ENCODE measurements at regions of chr2 and their contacts with region 1.

Region 1: DNA sequence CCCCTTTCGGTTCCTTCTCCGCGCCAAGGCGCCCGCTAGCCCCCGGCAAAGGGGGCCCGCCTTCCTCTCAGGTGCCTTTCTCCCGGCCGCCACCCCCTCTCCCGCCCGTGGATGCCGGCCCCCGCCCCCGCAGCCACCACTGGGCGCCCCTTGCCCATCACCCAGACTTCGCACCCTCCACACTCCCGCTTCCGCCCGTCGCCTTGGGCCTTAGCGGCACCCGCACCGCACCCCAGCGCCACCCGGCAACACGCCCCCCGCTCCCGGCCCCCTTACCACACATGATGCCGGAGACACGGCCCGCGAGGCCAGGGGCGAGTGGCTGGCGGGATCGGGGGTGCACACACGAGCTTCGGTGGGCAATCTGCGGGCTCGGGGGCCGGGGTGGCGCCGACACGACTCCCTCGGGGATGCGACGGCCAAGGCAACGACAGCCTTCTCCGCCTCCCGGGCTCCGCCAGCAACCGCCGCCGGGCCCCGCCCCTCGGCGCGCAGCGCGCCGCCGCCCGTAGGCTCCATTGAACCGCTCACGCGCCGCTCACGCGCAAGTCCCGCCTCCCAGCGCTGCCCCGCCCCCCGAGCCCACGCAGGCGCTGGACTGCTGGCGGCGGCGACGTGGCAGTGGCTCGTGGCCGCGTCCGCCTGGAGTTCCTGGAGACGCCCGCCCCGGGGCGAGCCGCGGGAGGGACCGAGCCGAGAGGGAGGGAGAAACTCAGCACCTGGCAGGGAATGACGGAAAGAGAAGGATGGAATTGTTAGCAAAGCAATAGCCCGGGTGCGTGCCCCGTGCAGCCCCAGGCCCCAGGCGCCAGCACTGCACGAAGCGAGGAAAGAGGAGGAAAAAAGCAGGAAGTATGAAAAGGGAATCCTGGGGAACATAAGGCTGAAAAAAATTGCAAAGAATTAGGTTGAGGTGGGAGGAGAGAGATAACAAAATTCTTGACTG is at the start of gene GFPT1:
- DNase-seq: peak; percentile 81 to 97 (median 91)
- H3K4me3 ChIP-seq: peak within 1 kb of the TSS; percentile 62 to 99 (median 89)
- H3K27ac ChIP-seq: peak within 1 kb of the TSS in 55 of 59 donors; percentile 9 to 91 (median 73)
- H3K27me3 ChIP-seq: no peaks in the 10 kb centered on the region
- CTCF ChIP-seq: peak in 29 of 56 donors; percentile 3 to 60 (median 28)
- total RNA-seq, gene GFPT1: 18.0 to 44.5 (median 31.9) TPM

Region 2: DNA sequence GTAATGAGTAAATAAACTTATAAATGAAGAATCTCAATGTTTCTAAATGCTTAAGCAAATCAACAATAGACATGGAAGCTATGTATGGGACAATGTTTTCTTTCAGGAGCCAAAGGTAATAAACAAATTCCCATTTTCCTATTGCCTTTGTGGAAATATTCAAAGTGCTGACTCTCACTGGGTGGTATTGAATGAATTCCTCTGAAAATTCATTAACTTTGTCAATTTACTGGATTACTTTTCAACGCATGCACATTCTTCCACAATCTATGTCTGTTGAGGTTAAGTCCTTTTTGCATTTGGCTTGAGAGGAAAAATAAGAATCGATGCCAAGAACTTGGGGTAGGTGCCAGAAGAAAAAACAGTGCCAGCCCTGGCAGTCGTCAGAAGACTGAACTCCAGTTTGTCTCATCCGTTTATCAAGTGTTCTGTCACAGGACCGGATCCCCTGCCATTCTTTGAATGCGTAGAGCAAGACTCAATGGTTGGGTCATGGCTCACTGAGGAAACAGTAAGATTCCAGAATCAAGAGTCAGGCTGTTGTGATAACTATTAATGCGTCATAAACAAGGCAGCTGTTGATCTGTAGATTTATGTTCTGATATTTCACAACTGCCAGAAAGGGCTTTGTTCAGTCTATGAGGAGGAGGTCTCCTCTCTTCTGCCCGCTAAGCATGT is 133.3 kb before region 1 on chr2:
- intact Hi-C with region 1: no loop called
- DNase-seq: no peak
- H3K4me3 ChIP-seq: no peak overlapping the region
- H3K27ac ChIP-seq: no peak overlapping the region
- H3K27me3 ChIP-seq: peaks cover 0 to 9% (median 0%) of the 10 kb centered on the region in 45 donors
- CTCF ChIP-seq: no peak

Region 3: DNA sequence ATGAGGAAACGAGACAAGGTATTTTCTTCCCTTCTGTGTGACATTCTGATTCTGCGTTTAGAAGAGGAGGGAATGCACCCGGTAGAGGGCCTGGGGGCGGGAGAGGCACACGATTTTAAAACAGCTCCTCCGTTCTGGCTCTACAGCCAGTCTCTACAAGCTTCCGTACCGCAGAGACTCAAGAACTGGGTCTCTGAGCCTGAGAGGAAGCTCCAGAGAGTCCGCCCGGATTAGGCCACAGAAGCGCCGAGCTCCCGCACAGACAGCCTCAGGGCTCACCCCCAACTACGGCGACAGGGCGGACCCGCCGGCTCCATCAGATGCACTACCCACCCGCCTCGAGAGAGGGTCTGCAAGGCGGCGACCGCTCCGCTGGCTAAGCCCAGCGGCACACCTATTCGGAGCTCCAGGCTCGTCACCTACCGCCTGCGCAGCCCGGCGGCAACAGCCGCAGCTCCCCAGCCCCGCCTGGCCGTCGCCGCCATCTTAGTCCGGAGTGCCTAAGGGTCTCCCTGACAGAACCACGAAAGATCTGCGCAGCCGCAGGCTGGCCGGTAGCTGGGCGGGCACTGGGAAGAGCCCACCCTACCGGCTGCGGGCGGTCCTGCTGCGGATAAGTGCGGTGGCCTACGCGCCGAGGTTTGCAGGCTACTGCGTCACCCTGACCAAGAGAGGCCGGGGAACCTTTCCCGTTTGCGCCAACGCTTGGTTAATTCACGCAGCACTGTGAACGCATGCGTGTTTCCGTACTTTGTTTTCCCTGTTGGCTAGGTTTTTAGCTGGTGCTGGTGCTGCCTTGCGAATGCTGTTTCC is 50.1 kb after region 1 on chr2 and contains the start of gene NFU1:
- intact Hi-C with region 1: loop called (anchors 2 kb)
- DNase-seq: peak; percentile 90 to 97 (median 95)
- H3K4me3 ChIP-seq: peak within 1 kb of the TSS; percentile 60 to 99 (median 92)
- H3K27ac ChIP-seq: peak within 1 kb of the TSS; percentile 86 to 100 (median 98)
- H3K27me3 ChIP-seq: no peaks in the 10 kb centered on the region
- CTCF ChIP-seq: peak; percentile 29 to 85 (median 68)
- total RNA-seq, gene NFU1: 27.9 to 60.5 (median 41.9) TPM

Region 4: GRCh38 chr2:69453475-69454129 is 66.5 kb after region 1 on chr2:
- intact Hi-C with region 1: no loop called
- DNase-seq: no peak
- H3K4me3 ChIP-seq: no peak overlapping the region
- H3K27ac ChIP-seq: no peak overlapping the region
- H3K27me3 ChIP-seq: no peaks in the 10 kb centered on the region
- CTCF ChIP-seq: no peak

Region 5: GRCh38 chr2:69717861-69718273 is 330.8 kb after region 1 on chr2:
- intact Hi-C with region 1: loop called in 1 of 2 experiments (anchors 10 kb)
- DNase-seq: no peak
- H3K4me3 ChIP-seq: no peak overlapping the region
- H3K27ac ChIP-seq: peak overlapping the region in 1 of 59 donors; percentile 1
- H3K27me3 ChIP-seq: no peaks in the 10 kb centered on the region
- CTCF ChIP-seq: no peak